ENCODE measurements at regions of chr11 and their contacts with region 1.

Region 1: GRCh38 chr11:126115816-126116331 is 53.2 kb upstream of the CDON start:
- DNase-seq: peak; percentile 70 to 80
- H3K4me3 ChIP-seq: no peak overlapping the region
- H3K4me3 Mint-ChIP-seq: peak overlapping the region; percentile 24
- H3K27ac Mint-ChIP-seq: peak overlapping the region; percentile 54
- H3K4me1 ChIP-seq: no peaks in the 10 kb centered on the region; the same call in 1 of the 2 replicates
- H3K4me1 Mint-ChIP-seq: peaks cover 10% of the 10 kb centered on the region
- H3K27me3 ChIP-seq: no peaks in the 10 kb centered on the region
- H3K27me3 Mint-ChIP-seq: no peaks in the 10 kb centered on the region
- CTCF ChIP-seq: peak; percentile 35 to 58

Region 2: GRCh38 chr11:125923012-125923579 is 192.8 kb before region 1 on chr11:
- CTCF ChIA-PET with region 1: no interaction called
- POLR2A ChIA-PET with region 1: no interaction called
- intact Hi-C with region 1: loop called (anchors 1 kb)
- DNase-seq: peak; percentile 79 to 84
- H3K4me3 ChIP-seq: no peak overlapping the region
- H3K4me3 Mint-ChIP-seq: no peak overlapping the region
- H3K27ac Mint-ChIP-seq: no peak overlapping the region
- H3K4me1 ChIP-seq: no peaks in the 10 kb centered on the region
- H3K4me1 Mint-ChIP-seq: no peaks in the 10 kb centered on the region
- H3K27me3 ChIP-seq: 0 out of 2 replicates have a peak, but pooled peaks cover 2% of the 10 kb centered on the region
- H3K27me3 Mint-ChIP-seq: peaks cover 14% of the 10 kb centered on the region
- CTCF ChIP-seq: peak; percentile 95 to 98

Region 3: DNA sequence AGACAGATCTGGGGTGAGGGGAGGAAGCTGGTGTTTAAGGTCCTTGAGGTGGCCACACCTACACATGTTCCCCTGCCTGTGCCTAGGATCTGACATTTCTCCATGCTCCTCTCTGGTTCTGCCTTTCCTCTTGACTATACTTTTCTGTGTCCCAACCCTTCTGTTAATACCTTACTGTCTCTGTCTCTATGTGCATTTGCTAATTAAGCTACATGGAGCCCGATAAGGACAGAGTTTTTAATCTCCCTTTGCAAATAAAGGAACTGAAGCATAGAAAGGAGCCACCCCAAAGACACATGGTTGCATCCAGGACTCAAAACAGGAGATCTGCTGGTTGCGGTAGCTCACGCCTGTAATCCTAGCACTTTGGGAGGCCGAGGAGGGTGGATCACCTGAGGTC is 20.1 kb before region 1 on chr11:
- CTCF ChIA-PET with region 1: no interaction called
- POLR2A ChIA-PET with region 1: no interaction called
- intact Hi-C with region 1: no loop called
- DNase-seq: no peak
- H3K4me3 ChIP-seq: no peak overlapping the region
- H3K4me3 Mint-ChIP-seq: no peak overlapping the region
- H3K27ac Mint-ChIP-seq: no peak overlapping the region
- H3K4me1 ChIP-seq: no peaks in the 10 kb centered on the region
- H3K4me1 Mint-ChIP-seq: no peaks in the 10 kb centered on the region
- H3K27me3 ChIP-seq: peaks cover 2% of the 10 kb centered on the region; the same call in 1 of the 2 replicates
- H3K27me3 Mint-ChIP-seq: peaks cover 7% of the 10 kb centered on the region
- CTCF ChIP-seq: no peak

Region 4: DNA sequence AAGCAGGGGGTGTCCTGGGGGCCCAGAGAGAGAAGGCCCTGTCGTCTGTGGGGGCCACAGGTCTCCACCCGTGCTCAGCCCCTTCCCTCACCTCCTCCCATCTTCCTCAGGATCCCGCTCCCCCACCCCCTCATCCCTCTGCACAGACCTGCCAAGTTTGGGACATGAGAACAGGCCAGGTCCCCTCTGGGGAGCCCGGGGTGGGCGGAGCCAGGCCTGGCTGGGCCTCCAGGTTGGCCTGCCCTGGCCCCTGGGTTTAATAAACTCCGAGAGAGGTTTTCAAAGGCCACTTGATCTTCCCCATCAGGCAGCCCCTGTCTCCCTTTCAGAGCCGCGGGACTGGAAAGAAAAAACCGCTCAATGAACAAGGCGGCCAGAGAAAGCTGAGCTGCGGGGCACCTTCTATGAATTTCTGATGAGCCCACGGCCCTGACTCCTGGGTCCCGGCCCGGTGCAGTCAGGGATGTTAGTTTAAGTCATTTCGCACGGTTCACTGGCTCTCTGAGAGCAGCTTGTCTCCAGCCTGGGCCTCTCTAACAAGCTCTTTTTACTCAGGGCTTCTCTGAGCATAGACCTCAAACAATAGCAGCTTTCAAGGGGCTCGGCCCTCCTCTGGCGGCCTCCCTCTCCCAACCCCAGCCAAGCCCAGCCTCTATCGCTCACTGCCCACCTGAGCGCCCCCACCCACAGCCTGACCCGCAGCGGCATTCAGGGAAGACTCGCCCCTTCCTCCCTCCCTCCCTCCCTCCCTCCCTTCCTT is 30.7 kb after region 1 on chr11:
- CTCF ChIA-PET with region 1: interaction called, 3 read pairs
- POLR2A ChIA-PET with region 1: no interaction called
- intact Hi-C with region 1: loop called (anchors 1 kb)
- DNase-seq: no peak
- H3K4me3 ChIP-seq: no peak overlapping the region
- H3K4me3 Mint-ChIP-seq: no peak overlapping the region
- H3K27ac Mint-ChIP-seq: peak overlapping the region; percentile 81
- H3K4me1 ChIP-seq: peaks cover 34% of the 10 kb centered on the region
- H3K4me1 Mint-ChIP-seq: peaks cover 30% of the 10 kb centered on the region
- H3K27me3 ChIP-seq: 0 out of 2 replicates have a peak, but pooled peaks cover 1% of the 10 kb centered on the region
- H3K27me3 Mint-ChIP-seq: no peaks in the 10 kb centered on the region
- CTCF ChIP-seq: peak in 1 of 2 experiments; percentile 2

Region 5: DNA sequence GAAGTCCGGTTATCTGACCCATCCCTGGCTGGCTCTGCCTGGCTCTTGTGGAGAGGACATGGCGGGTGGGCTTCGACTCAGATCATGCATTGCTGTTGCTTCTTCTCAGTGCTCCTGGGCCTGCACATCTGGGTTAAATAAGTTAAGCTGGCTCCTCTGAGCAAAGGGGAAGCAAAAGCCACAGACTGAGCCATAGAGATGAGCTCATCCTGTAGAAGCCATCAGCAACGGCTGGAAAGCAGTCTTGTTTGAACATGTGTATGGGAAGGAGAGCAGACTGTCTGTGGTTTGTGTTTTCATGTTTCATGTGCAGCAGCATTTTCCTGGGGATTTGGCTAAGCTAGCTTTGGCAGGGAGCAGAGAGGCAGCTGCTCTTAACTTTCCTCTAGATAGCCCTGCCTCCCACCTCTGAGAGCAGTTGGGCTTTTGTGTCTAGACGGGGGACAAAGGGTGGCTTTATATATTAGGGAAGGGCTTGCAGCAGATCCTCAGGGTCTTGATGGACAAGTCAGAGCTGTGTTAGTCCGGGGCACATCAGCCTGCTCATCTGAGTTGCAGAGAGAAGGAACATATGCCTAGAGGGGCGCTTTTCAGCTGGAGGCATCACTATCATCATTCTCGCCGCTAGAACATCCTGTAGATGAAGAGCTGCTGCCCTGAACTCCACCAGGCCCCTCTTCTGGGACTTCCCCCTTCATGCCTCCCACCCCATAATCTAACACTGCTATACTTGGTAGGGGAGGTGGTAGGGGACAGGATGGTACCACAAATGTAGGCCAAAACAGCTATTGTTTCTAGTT is 202.9 kb after region 1 on chr11:
- CTCF ChIA-PET with region 1: no interaction called
- POLR2A ChIA-PET with region 1: no interaction called
- intact Hi-C with region 1: no loop called
- DNase-seq: no peak
- H3K4me3 ChIP-seq: no peak overlapping the region
- H3K4me3 Mint-ChIP-seq: no peak overlapping the region
- H3K27ac Mint-ChIP-seq: no peak overlapping the region
- H3K4me1 ChIP-seq: 0 out of 2 replicates have a peak, but pooled peaks cover 6% of the 10 kb centered on the region
- H3K4me1 Mint-ChIP-seq: peaks cover 6% of the 10 kb centered on the region
- H3K27me3 ChIP-seq: no peaks in the 10 kb centered on the region
- H3K27me3 Mint-ChIP-seq: no peaks in the 10 kb centered on the region
- CTCF ChIP-seq: no peak